ENCODE measurements at regions of chr12 and their contacts with region 1.

Region 1: GRCh38 chr12:15220994-15221885 is at the start of gene RERG:
- DNase-seq: peak; percentile 34
- H3K4me3 ChIP-seq: peak within 1 kb of the TSS; percentile 56
- H3K27ac ChIP-seq: no peak within 1 kb of the TSS
- H3K27me3 ChIP-seq: no peaks in the 10 kb centered on the region
- CTCF ChIP-seq: peak; percentile 91
- polyA plus RNA-seq, gene RERG: 0.12 and 0.16 TPM in 2 replicates

Region 2: DNA sequence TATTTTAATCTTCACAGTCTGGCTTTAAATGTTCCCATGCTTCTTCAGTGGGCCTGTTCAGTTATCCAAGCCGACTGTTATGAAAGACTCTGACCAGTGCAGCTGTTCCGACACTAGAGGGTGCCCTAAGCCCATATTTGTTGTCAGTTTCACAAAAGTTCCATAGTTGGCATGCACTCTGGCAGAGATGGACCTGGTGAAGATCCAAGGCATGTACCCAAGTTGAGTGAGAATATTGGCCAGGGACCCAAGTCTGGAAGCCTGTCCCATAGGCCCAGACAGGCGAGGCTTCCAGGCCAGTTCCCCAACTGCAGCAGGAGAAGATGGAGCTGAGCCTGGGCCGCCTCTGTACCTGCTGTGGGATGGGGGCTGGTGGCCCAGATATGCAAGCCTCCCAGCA is 497.5 kb before region 1 on chr12:
- CTCF ChIA-PET with region 1: interaction called, 13 read pairs
- POLR2A ChIA-PET with region 1: no interaction called
- DNase-seq: peak; percentile 11
- H3K4me3 ChIP-seq: no peak overlapping the region
- H3K27ac ChIP-seq: no peak overlapping the region
- H3K27me3 ChIP-seq: no peaks in the 10 kb centered on the region
- CTCF ChIP-seq: peak; percentile 75

Region 3: GRCh38 chr12:15151161-15152120 is 69.8 kb before region 1 on chr12:
- CTCF ChIA-PET with region 1: interaction called, 41 read pairs
- POLR2A ChIA-PET with region 1: no interaction called
- DNase-seq: no peak
- H3K4me3 ChIP-seq: no peak overlapping the region
- H3K27ac ChIP-seq: no peak overlapping the region
- H3K27me3 ChIP-seq: no peaks in the 10 kb centered on the region
- CTCF ChIP-seq: peak; percentile 53

Region 4: DNA sequence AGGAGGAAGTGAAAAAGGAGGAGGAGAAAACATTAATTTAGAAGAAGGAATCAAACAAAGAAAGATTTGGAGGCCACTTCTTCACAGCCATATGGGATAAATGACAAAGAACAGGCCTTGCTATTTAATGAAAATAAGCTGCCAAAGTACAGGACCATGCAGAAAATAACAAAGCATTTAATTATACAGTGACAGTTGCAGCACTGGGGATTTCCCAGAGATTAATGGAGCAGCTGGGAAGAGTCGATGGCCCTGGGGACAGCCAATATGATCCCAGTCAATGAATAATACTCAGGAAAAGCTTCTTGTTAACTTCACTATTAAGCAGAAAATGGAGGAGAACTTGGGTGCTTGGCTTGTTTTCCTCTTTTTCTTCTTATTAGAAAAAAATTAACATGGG is 34.6 kb before region 1 on chr12:
- CTCF ChIA-PET with region 1: interaction called, 11 read pairs
- POLR2A ChIA-PET with region 1: no interaction called
- DNase-seq: no peak
- H3K4me3 ChIP-seq: no peak overlapping the region
- H3K27ac ChIP-seq: no peak overlapping the region
- H3K27me3 ChIP-seq: no peaks in the 10 kb centered on the region
- CTCF ChIP-seq: no peak

Region 5: DNA sequence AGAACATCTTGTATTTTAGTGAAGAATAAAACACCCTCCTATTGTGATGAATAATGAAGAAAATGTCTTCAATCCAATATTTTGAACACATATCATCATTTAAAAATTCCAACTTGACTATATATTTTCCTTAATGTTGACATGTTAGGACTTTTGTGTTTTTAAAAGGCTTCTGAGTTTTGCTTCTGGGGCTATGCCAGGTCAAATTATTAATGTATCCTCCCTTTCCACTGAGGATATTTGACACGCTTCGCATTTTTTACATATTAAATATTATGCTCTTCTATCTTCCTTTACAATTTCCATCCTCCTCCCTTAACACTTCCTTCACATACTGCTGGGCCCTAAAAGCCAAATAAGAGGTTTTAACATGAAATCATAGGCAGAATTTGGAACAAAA is 20.6 kb before region 1 on chr12:
- CTCF ChIA-PET with region 1: interaction called, 34 read pairs
- POLR2A ChIA-PET with region 1: no interaction called
- DNase-seq: no peak
- H3K4me3 ChIP-seq: no peak overlapping the region
- H3K27ac ChIP-seq: no peak overlapping the region
- H3K27me3 ChIP-seq: no peaks in the 10 kb centered on the region
- CTCF ChIP-seq: no peak

Region 6: GRCh38 chr12:15234011-15234410 is 12.8 kb after region 1 on chr12:
- CTCF ChIA-PET with region 1: interaction called, 15 read pairs
- POLR2A ChIA-PET with region 1: no interaction called
- DNase-seq: no peak
- H3K4me3 ChIP-seq: no peak overlapping the region
- H3K27ac ChIP-seq: no peak overlapping the region
- H3K27me3 ChIP-seq: no peaks in the 10 kb centered on the region
- CTCF ChIP-seq: no peak

Region 7: GRCh38 chr12:15268927-15269552 is 47.8 kb after region 1 on chr12:
- CTCF ChIA-PET with region 1: interaction called, 10 read pairs
- POLR2A ChIA-PET with region 1: no interaction called
- DNase-seq: peak; percentile 23
- H3K4me3 ChIP-seq: no peak overlapping the region
- H3K27ac ChIP-seq: no peak overlapping the region
- H3K27me3 ChIP-seq: no peaks in the 10 kb centered on the region
- CTCF ChIP-seq: peak; percentile 94

Measured in AG04450 (cell line).